ENCODE measurements at regions of chr3 and their contacts with region 1.

Region 1: GRCh38 chr3:115814778-115815380 is 191.6 kb downstream of the GAP43 start:
- DNase-seq: peak; percentile 71
- H3K4me3 ChIP-seq: no peak overlapping the region
- H3K27ac ChIP-seq: no peak overlapping the region
- H3K4me1 ChIP-seq: no peaks in the 10 kb centered on the region
- H3K27me3 ChIP-seq: peaks cover 10 to 11% of the 10 kb centered on the region in 2 experiments
- CTCF ChIP-seq: peak; percentile 76 to 93
- POLR2A ChIP-seq: no peak

Region 2: DNA sequence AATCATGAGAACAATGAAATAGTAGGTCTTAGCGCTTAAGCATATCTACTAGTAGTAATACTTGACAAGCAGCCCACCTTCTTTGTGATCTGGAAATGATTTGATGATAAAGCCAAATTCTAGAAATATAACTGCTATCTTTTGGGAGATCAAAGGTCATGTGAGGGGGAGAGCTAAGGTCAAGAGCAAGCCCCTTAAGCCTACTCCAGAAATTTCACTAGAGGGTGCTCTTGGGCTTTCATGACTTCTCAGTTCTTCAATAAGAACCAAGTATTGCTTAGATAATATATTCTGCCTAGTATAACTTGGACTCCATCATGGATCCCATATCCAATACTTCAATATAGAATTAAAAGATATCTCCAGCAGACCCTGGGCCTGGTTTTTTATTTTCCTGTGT is 987.4 kb before region 1 on chr3:
- CTCF ChIA-PET with region 1: no interaction called
- POLR2A ChIA-PET with region 1: no interaction called
- dilution Hi-C with region 1: no loop called
- intact Hi-C with region 1: loop called (anchors 2 kb)
- DNase-seq: peak; percentile 47
- H3K4me3 ChIP-seq: no peak overlapping the region
- H3K27ac ChIP-seq: no peak overlapping the region
- H3K4me1 ChIP-seq: no peaks in the 10 kb centered on the region
- H3K27me3 ChIP-seq: no peaks in the 10 kb centered on the region
- CTCF ChIP-seq: peak; percentile 18 to 45
- POLR2A ChIP-seq: no peak

Region 3: DNA sequence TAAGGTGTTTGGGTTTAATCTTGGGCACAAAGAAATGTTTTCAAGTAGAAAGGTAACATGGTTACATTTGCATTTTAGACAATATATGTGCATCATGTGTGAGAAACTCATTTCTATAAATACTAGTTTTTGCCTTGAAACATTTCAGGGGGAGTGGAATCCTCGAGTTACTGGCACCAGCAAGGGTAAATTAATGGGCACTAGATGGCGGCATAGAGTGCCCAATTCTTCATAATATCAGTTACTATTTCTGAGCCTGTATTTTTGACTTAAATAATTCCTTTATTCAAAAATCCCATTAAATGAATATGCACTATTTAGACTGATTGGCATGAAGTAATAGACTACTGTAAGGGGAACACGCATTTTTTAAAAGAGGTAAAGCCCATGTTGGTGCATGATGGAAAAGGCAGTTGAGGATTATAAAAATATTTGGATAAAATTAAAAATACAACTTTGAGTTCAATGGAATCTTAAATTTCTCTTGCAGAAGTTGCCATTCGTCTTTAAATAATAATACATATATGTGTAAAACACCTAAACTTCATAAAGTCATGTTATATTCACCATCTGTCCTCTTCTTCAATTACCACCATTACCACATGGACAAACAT is 774.1 kb before region 1 on chr3:
- CTCF ChIA-PET with region 1: interaction called, 4 read pairs
- POLR2A ChIA-PET with region 1: no interaction called
- dilution Hi-C with region 1: no loop called
- intact Hi-C with region 1: loop called (anchors 2 kb)
- DNase-seq: peak; percentile 67
- H3K4me3 ChIP-seq: no peak overlapping the region
- H3K27ac ChIP-seq: no peak overlapping the region
- H3K4me1 ChIP-seq: no peaks in the 10 kb centered on the region
- H3K27me3 ChIP-seq: no peaks in the 10 kb centered on the region
- CTCF ChIP-seq: peak; percentile 58 to 59
- POLR2A ChIP-seq: no peak

Measured in endothelial cell of umbilical vein (primary cell).